Motor neuron (in vitro differentiated cells): ENCODE measurements at regions of chr14 and their contacts with region 1.

Region 1: DNA sequence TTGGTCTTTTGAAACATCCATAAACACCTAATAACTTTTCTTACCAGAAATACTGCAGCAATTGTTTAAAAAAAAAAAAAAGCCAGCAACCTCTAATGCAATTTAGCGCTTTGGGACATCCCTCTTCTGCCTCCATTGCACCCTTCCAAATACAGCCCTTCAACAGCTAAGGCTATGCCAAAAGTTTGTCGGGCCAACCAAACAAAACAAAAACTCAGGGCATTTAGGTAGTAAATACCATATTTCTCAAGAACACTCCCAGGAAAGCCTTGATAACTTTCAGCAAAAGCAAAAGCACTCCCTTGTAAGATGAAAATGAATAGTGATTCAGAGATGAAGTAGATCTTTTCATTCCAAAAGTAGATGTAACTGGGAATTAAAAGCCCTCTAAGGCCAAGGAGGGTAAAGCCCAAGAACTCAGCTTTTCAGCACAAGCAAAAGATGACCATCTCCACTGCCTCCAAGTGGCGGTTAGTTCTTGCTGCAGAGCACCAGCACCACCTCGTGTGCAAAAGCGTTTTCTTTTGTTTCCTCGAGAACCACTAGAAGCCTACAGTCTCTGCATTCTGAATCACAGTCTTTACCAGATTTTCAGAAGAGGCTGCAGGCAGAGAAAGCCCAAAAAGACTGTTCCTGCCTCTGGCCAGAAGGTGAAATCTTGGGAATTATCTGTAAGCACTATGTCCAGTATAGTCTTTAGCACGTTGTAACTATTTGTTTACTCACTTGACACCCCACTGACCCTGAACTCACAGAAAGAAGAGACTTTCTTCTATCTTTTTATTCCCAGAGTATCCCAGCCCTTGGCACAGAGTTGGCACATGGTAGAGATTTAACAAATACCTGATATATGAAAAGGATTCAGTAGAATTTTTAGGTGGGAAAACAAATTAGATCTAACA is 53.1 kb downstream of the SIX6 start:
- ATAC-seq: peak; percentile 66 to 98 (median 84)
- H3K4me3 ChIP-seq: no peak overlapping the region
- H3K27ac ChIP-seq: no peak overlapping the region
- H3K4me1 ChIP-seq: no peaks in the 10 kb centered on the region

Region 2: GRCh38 chr14:60064491-60065072 is 497.5 kb before region 1 on chr14:
- in situ Hi-C with region 1: loop called in 1 of 9 experiments (anchors 25 kb)
- ATAC-seq: peak in 3 of 8 experiments; percentile 51 to 56 (median 54)
- H3K4me3 ChIP-seq: no peak overlapping the region
- H3K27ac ChIP-seq: no peak overlapping the region
- H3K4me1 ChIP-seq: peaks cover 0 to 4% of the 10 kb centered on the region in 2 donors

Region 3: GRCh38 chr14:60311417-60311816 is 250.7 kb before region 1 on chr14:
- in situ Hi-C with region 1: no loop called
- ATAC-seq: peak in 3 of 8 experiments; percentile 13 to 32 (median 25)
- H3K4me3 ChIP-seq: no peak overlapping the region
- H3K27ac ChIP-seq: no peak overlapping the region
- H3K4me1 ChIP-seq: peaks cover 4 to 6% of the 10 kb centered on the region in 2 donors

Region 4: GRCh38 chr14:60331201-60332045 is 230.7 kb before region 1 on chr14:
- in situ Hi-C with region 1: loop called in 1 of 9 experiments (anchors 25 kb)
- ATAC-seq: peak; percentile 10 to 52 (median 32)
- H3K4me3 ChIP-seq: no peak overlapping the region
- H3K27ac ChIP-seq: no peak overlapping the region
- H3K4me1 ChIP-seq: peaks cover 6 to 8% of the 10 kb centered on the region in 2 donors

Region 5: DNA sequence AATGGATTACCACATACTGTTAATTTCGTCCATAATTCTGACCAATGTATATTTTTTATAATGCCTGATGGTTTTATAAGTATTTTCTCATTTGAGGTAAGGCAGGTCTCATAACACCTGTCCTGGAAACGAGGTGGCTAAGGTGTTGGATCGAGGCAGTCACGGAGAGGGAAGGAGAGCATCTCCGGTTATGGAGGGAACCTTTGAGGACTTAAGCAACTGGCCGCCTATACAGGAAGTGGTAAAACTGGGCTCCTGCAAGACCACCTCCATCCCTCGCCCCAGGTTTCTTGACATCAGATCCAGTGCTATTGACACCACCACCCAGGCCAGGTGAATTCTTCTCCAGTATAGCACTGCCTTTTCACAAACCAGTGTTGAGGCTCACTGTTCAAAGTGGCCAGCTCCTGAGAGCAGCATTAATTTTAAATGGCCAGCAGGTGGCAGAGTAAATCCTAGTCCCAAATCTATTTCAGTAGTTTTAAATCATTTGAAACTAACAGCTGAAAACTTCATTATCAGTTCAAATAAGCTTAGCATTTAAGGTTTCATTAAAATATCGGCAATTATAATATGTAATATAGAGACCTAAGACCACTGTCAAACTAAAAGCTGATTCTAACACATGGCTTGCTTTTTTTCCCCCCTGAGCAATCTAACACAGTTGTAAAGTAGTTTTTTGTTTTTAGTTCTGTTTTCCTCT is 212.3 kb before region 1 on chr14:
- in situ Hi-C with region 1: loop called in 4 of 9 experiments (anchors 10 to 25 kb)
- ATAC-seq: peak in 5 of 8 experiments; percentile 33 to 76 (median 68)
- H3K4me3 ChIP-seq: no peak overlapping the region
- H3K27ac ChIP-seq: no peak overlapping the region
- H3K4me1 ChIP-seq: no peaks in the 10 kb centered on the region

Region 6: DNA sequence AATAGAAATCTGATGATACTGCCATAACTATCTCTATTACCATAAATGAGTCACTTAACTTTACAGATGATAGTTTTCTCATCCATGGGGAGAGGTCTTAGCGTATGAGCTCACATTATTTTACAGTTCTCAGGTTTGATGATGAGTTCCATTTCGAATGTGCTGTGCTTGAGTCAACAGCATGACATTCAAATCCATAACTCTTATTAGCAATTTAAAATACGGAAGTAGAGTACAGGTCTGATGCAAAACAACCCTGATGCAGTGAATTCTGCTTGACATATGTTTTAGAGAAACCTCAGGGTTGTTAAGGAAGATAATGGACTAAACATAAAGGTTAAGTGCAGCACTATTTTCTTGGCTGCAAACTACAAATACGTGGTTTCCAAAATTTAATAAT is 106.2 kb before region 1 on chr14:
- in situ Hi-C with region 1: no loop called
- ATAC-seq: peak in 3 of 8 experiments; percentile 47 to 58 (median 47)
- H3K4me3 ChIP-seq: no peak overlapping the region
- H3K27ac ChIP-seq: no peak overlapping the region
- H3K4me1 ChIP-seq: no peaks in the 10 kb centered on the region